ENCODE measurements at regions of chr22 and their contacts with region 1.

Region 1: GRCh38 chr22:36387752-36388518 is at the start of gene MYH9:
- DNase-seq: peak; percentile 99
- ATAC-seq: peak; percentile 81
- H3K4me3 ChIP-seq: peak within 1 kb of the TSS; percentile 67 to 95 (median 87)
- H3K4me3 Mint-ChIP-seq: peak within 1 kb of the TSS; percentile 98
- H3K27ac ChIP-seq: peak within 1 kb of the TSS; percentile 79 to 93
- H3K27ac Mint-ChIP-seq: peak within 1 kb of the TSS; percentile 92
- H3K4me1 ChIP-seq: peaks cover 57 to 70% of the 10 kb centered on the region in 2 donors
- H3K4me1 Mint-ChIP-seq: peaks cover 54% of the 10 kb centered on the region
- H3K27me3 ChIP-seq: no peaks in the 10 kb centered on the region
- H3K27me3 Mint-ChIP-seq: no peaks in the 10 kb centered on the region
- CTCF ChIP-seq: no peak
- total RNA-seq, gene MYH9: 552 and 554 TPM in 2 replicates

Region 2: DNA sequence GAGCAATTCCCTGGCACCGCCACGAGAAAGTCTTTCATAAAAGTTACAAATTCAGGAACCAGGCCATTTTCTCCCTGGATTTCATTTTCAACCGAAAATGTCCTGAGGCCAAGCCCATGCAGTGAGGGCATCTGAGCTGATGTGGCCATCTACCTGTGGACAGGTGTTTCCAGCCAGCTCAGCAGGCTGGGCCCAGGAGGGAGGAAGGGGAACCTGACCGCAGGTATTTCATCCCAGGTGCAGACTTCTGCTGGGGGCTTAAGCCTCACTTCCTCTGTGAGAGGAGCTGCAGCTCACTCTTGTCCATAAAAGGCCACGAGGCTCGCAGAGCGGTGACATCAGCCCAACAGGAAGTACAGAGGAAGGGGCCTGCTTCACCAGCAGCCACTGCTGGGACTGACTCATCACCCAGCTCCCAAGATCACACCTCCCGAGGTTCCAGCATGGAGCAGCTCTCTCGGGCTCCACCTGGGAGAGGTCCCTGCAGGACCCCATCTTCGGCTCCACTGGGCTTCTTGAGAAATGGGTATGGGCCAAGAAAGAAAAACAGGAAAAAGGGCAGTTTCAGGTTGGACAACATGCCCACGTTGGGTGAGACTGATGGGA is 56.5 kb before region 1 on chr22:
- CTCF ChIA-PET with region 1: interaction called, 10 read pairs
- POLR2A ChIA-PET with region 1: interaction called, 11 read pairs
- intact Hi-C with region 1: loop called (anchors 1 kb)
- DNase-seq: peak; percentile 87
- ATAC-seq: peak; percentile 66
- H3K4me3 ChIP-seq: peak overlapping the region in 4 of 5 experiments; percentile 14 to 58 (median 30)
- H3K4me3 Mint-ChIP-seq: peak overlapping the region; percentile 84
- H3K27ac ChIP-seq: peak overlapping the region; percentile 83 to 86
- H3K27ac Mint-ChIP-seq: peak overlapping the region; percentile 97
- H3K4me1 ChIP-seq: peaks cover 78 to 90% of the 10 kb centered on the region in 2 donors
- H3K4me1 Mint-ChIP-seq: peaks cover 89% of the 10 kb centered on the region
- H3K27me3 ChIP-seq: no peaks in the 10 kb centered on the region
- H3K27me3 Mint-ChIP-seq: no peaks in the 10 kb centered on the region
- CTCF ChIP-seq: no peak

Region 3: GRCh38 chr22:36369922-36370791 is 17.8 kb before region 1 on chr22:
- CTCF ChIA-PET with region 1: interaction called, 12 read pairs
- POLR2A ChIA-PET with region 1: interaction called, 7 read pairs
- intact Hi-C with region 1: loop called (anchors 2 kb)
- DNase-seq: peak; percentile 77
- ATAC-seq: peak; percentile 78
- H3K4me3 ChIP-seq: peak overlapping the region in 2 of 5 experiments; percentile 6 to 29
- H3K4me3 Mint-ChIP-seq: peak overlapping the region; percentile 85
- H3K27ac ChIP-seq: peak overlapping the region; percentile 52 to 83
- H3K27ac Mint-ChIP-seq: peak overlapping the region; percentile 90
- H3K4me1 ChIP-seq: peaks cover 92 to 99% of the 10 kb centered on the region in 2 donors
- H3K4me1 Mint-ChIP-seq: peaks cover 90% of the 10 kb centered on the region
- H3K27me3 ChIP-seq: no peaks in the 10 kb centered on the region
- H3K27me3 Mint-ChIP-seq: no peaks in the 10 kb centered on the region
- CTCF ChIP-seq: no peak

Region 4: DNA sequence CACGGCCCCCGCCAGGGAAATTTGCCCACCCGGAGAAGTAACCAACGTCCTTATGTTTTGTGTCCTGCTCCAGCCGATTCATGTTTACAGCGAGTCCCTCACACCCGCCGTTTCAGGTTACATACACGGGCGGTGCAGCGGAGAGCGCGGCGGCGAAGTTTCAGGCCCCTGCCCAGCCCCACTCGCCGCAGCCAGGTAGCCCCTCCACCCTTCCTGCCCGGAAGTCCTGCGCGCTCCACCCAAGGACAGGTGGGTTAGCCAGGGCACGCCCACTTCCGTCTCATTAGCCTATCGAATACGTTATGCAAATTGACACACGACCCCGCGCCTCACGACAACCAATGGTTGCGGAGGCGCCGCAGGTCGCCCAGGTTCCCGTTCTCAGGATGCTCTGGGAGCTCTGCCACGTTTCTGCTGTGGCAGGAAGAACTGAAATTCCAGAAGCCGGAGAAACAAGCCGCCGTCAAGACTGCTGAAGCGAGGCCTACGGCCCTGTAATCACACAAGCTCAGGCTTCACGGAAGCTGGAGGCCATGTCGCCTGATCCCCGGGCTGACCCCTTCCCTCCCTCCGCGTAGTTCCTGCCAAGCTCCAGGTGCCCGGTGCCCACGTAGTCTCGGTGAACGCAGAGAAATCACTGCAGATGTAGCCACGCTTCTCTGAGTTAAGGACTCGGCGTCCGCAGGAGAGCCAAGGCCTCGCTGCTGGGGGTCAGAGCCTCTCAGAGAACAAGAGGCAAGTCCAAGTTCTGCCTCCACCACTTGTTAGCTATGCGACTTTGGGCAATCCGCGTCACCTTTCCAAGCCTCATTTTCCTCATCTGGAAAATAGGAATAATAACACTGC is 22.2 kb after region 1 on chr22:
- CTCF ChIA-PET with region 1: interaction called, 13 read pairs
- POLR2A ChIA-PET with region 1: interaction called, 9 read pairs
- intact Hi-C with region 1: loop called (anchors 2 kb)
- DNase-seq: peak; percentile 84
- ATAC-seq: peak; percentile 63
- H3K4me3 ChIP-seq: peak overlapping the region in 4 of 5 experiments; percentile 27 to 47 (median 38)
- H3K4me3 Mint-ChIP-seq: peak overlapping the region; percentile 87
- H3K27ac ChIP-seq: peak overlapping the region; percentile 79 to 82
- H3K27ac Mint-ChIP-seq: peak overlapping the region; percentile 92
- H3K4me1 ChIP-seq: peaks cover 54 to 70% of the 10 kb centered on the region in 2 donors
- H3K4me1 Mint-ChIP-seq: peaks cover 59% of the 10 kb centered on the region
- H3K27me3 ChIP-seq: no peaks in the 10 kb centered on the region
- H3K27me3 Mint-ChIP-seq: no peaks in the 10 kb centered on the region
- CTCF ChIP-seq: no peak

Region 5: DNA sequence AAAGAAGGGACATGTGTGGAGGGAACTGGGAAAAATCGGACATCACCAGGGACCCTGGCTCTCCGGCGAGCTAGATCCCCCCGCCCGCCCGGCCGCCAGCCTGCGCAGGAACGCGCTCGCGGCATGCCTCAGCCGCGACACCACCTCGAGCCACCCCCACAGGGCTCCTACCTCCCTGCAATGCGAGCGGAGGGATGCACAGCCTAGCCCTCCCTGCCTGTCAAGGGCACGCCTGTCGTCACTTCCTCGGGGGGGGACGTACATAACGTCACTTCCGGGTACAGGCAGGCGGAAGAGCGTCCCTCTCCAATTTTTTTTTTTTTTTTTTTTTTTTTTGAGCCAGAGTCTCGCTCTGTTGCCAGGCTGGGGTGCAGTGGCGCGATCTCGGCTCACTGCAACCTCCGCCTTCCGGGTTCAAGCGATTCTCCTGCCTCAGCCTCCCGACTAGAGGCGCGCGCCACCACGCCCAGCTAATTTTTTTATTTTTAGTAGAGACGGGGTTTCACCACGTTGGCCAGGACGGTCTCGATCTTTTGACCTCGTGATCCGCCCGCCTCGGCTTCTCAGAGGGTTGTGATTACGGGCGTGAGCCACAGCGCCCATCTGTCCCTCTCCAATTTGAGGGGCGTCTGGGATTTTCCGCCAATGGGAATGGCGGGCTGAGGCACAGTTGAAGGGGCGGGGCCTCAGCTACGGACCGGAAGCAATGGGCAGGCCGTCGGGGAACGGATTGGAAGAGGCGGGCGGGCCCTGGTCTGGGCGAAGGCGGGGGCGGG is 93.6 kb after region 1 on chr22 and contains the start of gene TXN2:
- CTCF ChIA-PET with region 1: interaction called, 4 read pairs
- POLR2A ChIA-PET with region 1: interaction called, 8 read pairs
- intact Hi-C with region 1: loop called (anchors 1 kb)
- DNase-seq: peak; percentile 98
- ATAC-seq: peak; percentile 87
- H3K4me3 ChIP-seq: peak within 1 kb of the TSS; percentile 82 to 90 (median 86)
- H3K4me3 Mint-ChIP-seq: peak within 1 kb of the TSS; percentile 95
- H3K27ac ChIP-seq: peak within 1 kb of the TSS; percentile 95 to 98
- H3K27ac Mint-ChIP-seq: peak within 1 kb of the TSS; percentile 93
- H3K4me1 ChIP-seq: peaks cover 11 to 18% of the 10 kb centered on the region in 2 donors
- H3K4me1 Mint-ChIP-seq: peaks cover 17% of the 10 kb centered on the region
- H3K27me3 ChIP-seq: no peaks in the 10 kb centered on the region
- H3K27me3 Mint-ChIP-seq: no peaks in the 10 kb centered on the region
- CTCF ChIP-seq: no peak
- total RNA-seq, gene TXN2: 37.4 and 39.6 TPM in 2 replicates

Measured in B cell (primary cell).